ENCODE measurements at regions of chr7 and their contacts with region 1.

Region 1: GRCh38 chr7:17289074-17289645 is 9.3 kb upstream of the AHR start:
- DNase-seq: no peak
- H3K4me3 ChIP-seq: no peak overlapping the region
- H3K4me3 Mint-ChIP-seq: no peak overlapping the region
- H3K27ac ChIP-seq: no peak overlapping the region
- H3K27ac Mint-ChIP-seq: peak overlapping the region in 1 of 7 donors; percentile 15
- H3K4me1 ChIP-seq: no peaks in the 10 kb centered on the region
- H3K4me1 Mint-ChIP-seq: peaks cover 0 to 4% (median 0%) of the 10 kb centered on the region in 4 donors
- H3K27me3 ChIP-seq: no peaks in the 10 kb centered on the region
- H3K27me3 Mint-ChIP-seq: no peaks in the 10 kb centered on the region

Region 2: GRCh38 chr7:17275749-17276671 is 13.2 kb before region 1 on chr7:
- CTCF ChIA-PET with region 1: interaction called, 3 read pairs
- POLR2A ChIA-PET with region 1: no interaction called
- intact Hi-C with region 1: loop called (anchors 2 kb)
- DNase-seq: no peak
- H3K4me3 ChIP-seq: no peak overlapping the region
- H3K4me3 Mint-ChIP-seq: no peak overlapping the region
- H3K27ac ChIP-seq: no peak overlapping the region
- H3K27ac Mint-ChIP-seq: no peak overlapping the region
- H3K4me1 ChIP-seq: peaks cover 12% of the 10 kb centered on the region
- H3K4me1 Mint-ChIP-seq: peaks cover 7 to 15% (median 12%) of the 10 kb centered on the region in 4 donors
- H3K27me3 ChIP-seq: no peaks in the 10 kb centered on the region
- H3K27me3 Mint-ChIP-seq: no peaks in the 10 kb centered on the region